ENCODE measurements at regions of chr5 and their contacts with region 1.

Region 1: GRCh38 chr5:16626663-16627264 is 10.0 kb upstream of the RETREG1 start:
- DNase-seq: peak in 1 of 5 donors; percentile 47
- H3K4me3 ChIP-seq: no peak overlapping the region
- H3K4me3 Mint-ChIP-seq: peak overlapping the region in 3 of 7 donors; percentile 12 to 17 (median 16)
- H3K27ac ChIP-seq: no peak overlapping the region
- H3K27ac Mint-ChIP-seq: peak overlapping the region in 3 of 8 donors; percentile 63 to 92 (median 81)
- H3K4me1 ChIP-seq: peaks cover 46% of the 10 kb centered on the region
- H3K4me1 Mint-ChIP-seq: peaks cover 22 to 40% (median 34%) of the 10 kb centered on the region in 3 donors
- H3K27me3 ChIP-seq: no peaks in the 10 kb centered on the region
- H3K27me3 Mint-ChIP-seq: peaks cover 2 to 6% of the 10 kb centered on the region in 2 donors

Region 2: GRCh38 chr5:16456103-16456832 is 170.5 kb before region 1 on chr5:
- CTCF ChIA-PET with region 1: no interaction called
- POLR2A ChIA-PET with region 1: no interaction called
- DNase-seq: peak; percentile 4 to 59 (median 48)
- H3K4me3 ChIP-seq: no peak overlapping the region
- H3K4me3 Mint-ChIP-seq: peak overlapping the region; percentile 8 to 72 (median 64)
- H3K27ac ChIP-seq: no peak overlapping the region
- H3K27ac Mint-ChIP-seq: peak overlapping the region; percentile 63 to 94 (median 78)
- H3K4me1 ChIP-seq: peaks cover 53% of the 10 kb centered on the region
- H3K4me1 Mint-ChIP-seq: peaks cover 52 to 86% (median 82%) of the 10 kb centered on the region in 3 donors
- H3K27me3 ChIP-seq: no peaks in the 10 kb centered on the region
- H3K27me3 Mint-ChIP-seq: no peaks in the 10 kb centered on the region

Region 3: DNA sequence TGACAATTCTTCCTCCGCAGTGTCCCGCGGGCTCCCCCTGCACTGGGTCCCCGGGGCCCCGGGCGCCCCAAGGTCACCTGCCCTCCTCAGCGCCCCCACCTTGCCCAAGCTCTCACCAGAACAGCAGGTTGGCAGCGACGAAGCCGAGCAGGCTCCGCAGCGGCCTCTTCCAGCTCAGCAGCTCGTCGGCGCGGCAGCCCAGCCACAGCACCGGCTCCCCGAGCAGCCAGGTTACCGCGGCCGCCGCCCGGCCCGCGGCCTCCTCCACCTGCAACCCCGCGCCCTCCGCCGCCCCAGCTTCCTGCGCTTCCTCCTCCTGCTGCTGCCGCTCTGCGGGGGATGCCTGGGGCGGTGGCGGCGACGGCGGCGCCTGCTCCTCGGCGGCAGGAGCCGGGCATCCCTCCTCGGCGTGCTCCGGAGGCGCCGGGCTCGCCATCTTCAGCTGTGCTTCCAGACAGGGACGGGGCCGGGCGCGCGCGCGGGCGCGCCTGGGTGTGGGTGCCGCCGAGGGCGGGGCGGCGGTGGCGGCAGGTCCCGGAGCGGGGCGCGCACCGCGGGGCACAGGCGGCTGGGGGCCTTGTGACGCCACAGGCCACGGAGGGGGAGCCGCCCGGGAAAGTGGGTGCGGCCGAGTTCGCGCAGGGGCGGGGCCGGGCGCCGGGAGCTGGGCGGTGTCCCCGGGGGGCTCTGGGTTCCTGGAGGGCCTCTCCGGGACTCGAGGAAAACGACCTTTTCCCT is 10.1 kb before region 1 on chr5 and contains the start of gene RETREG1:
- CTCF ChIA-PET with region 1: interaction called, 13 read pairs
- POLR2A ChIA-PET with region 1: interaction called, 12 read pairs
- DNase-seq: peak; percentile 65 to 93 (median 85)
- H3K4me3 ChIP-seq: peak within 1 kb of the TSS; percentile 66
- H3K4me3 Mint-ChIP-seq: peak within 1 kb of the TSS in 6 of 7 donors; percentile 90 to 96 (median 94)
- H3K27ac ChIP-seq: peak within 1 kb of the TSS; percentile 82
- H3K27ac Mint-ChIP-seq: peak within 1 kb of the TSS; percentile 87 to 98 (median 95)
- H3K4me1 ChIP-seq: peaks cover 35% of the 10 kb centered on the region
- H3K4me1 Mint-ChIP-seq: peaks cover 36 to 40% (median 38%) of the 10 kb centered on the region in 3 donors
- H3K27me3 ChIP-seq: no peaks in the 10 kb centered on the region
- H3K27me3 Mint-ChIP-seq: no peaks in the 10 kb centered on the region
- total RNA-seq, gene RETREG1: 11.4 to 12.1 TPM

Measured in CD8-positive, alpha-beta memory T cell (primary cell).